Motor neuron (in vitro differentiated cells): ENCODE measurements at regions of chr10 and their contacts with region 1.

Region 1: DNA sequence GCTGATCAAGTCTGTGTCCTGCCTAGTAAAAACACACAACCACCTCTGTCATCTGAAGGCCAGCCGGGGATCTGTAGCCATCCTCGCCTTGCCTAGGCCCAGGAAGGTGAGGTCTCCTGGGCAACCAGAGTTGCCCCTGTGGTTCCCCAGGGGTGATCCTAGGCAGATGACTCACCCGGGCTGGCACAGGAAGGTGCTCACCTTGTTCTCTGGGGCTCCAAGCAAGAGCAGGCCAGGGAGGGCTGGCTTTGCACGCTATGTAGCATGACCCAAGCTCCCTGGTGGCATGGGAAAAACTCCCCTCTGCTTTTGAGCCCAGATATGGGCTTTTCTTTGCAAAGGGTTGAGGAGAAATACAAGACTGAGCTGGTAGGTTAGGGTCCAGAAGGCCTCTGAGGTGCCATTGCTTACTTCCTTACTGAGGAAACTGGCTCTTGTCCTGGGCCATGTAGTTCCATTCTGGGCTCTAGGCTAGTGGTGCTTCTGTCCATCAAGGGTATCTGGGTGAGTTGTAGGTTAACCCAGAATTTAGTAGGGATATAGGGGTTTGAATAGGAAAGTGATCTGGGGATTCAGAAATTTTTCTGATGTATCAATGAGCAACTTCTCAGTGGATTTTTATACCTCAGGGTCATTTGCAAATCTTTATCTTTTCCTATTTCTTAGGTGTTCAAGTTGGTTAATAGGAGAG is 112.0 kb downstream of the NT5C2 start:
- ATAC-seq: no peak
- H3K4me3 ChIP-seq: no peak overlapping the region
- H3K27ac ChIP-seq: no peak overlapping the region
- H3K4me1 ChIP-seq: no peaks in the 10 kb centered on the region

Region 2: GRCh38 chr10:102904346-102904745 is 176.7 kb before region 1 on chr10:
- in situ Hi-C with region 1: no loop called
- ATAC-seq: no peak
- H3K4me3 ChIP-seq: no peak overlapping the region
- H3K27ac ChIP-seq: no peak overlapping the region
- H3K4me1 ChIP-seq: no peaks in the 10 kb centered on the region

Region 3: DNA sequence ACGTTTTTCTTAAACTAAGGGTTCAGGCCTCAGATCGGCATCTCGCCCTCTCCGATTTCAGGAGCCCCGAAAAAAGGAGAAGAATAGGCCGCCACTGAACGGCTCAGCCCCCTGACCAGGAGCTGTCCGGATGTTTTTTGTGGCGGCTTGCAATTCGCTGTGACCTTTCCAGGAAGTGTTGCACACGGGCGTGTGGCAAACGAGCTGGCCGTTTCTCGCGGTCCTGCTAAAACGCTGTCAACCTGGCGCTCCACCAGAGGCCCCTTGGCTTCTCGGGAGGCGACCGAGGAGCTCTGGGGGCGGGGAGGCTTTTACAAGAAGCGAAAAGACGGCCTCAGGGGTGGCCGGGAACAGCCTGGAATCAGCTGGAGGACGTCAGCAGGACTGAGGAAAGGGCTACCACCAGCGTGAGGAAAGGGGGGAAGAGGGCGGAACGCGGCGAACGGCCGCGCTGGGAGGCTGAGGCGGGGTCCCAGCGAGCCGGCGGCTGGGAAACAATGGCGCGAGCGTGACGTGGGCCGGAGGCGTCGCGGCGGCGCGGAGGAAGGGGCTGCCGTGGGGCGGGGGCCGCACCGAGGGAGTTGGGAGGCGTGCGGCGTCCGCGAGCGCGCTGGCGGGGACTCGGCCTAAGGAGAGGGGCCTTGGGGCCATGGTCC is 111.5 kb after region 1 on chr10:
- in situ Hi-C with region 1: no loop called
- ATAC-seq: peak; percentile 61 to 88 (median 84)
- H3K4me3 ChIP-seq: peak overlapping the region; percentile 53 to 92 (median 77)
- H3K27ac ChIP-seq: peak overlapping the region; percentile 90 to 92
- H3K4me1 ChIP-seq: peaks cover 11 to 13% of the 10 kb centered on the region in 2 donors

Region 4: DNA sequence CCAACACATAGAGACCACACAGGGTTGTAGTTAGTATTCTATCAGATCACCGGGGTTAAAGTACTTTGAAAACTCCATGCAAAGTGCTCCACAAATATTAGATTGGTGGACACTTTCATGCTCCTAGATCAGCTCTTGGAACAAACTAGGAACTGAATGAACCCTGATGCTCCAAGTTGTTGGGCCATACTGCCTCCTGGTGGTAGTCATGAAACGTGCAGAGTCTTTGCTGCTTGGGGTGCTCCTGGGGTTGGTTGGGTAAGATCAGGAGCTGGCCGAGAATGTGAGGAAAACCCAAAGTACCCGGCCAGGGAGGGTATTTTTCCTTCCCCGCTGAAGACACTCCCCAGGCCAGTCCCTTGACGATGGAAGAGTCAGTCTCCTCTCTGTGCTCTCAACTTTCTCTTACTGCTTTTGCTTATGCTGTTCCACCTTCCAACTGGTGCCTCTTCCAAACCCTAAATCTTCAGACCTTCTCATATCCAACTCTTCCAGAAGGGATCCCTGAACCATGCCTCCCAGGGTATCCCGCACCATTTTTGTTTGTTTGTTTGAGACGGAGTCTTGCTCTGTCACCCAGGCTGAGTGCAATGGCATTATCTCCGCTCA is 163.7 kb after region 1 on chr10:
- in situ Hi-C with region 1: loop called in 1 of 9 experiments (anchors 25 kb)
- ATAC-seq: peak in 7 of 8 experiments; percentile 50 to 94 (median 66)
- H3K4me3 ChIP-seq: no peak overlapping the region
- H3K27ac ChIP-seq: no peak overlapping the region
- H3K4me1 ChIP-seq: peaks cover 0 to 5% of the 10 kb centered on the region in 2 donors

Region 5: GRCh38 chr10:103921750-103922195 is 840.7 kb after region 1 on chr10:
- in situ Hi-C with region 1: no loop called
- ATAC-seq: peak in 1 of 8 experiments; percentile 3
- H3K4me3 ChIP-seq: no peak overlapping the region
- H3K27ac ChIP-seq: no peak overlapping the region
- H3K4me1 ChIP-seq: peaks cover 4 to 12% of the 10 kb centered on the region in 2 donors